CD4-positive, alpha-beta memory T cell (primary cell): ENCODE measurements at regions of chr5 and their contacts with region 1.

Region 1: DNA sequence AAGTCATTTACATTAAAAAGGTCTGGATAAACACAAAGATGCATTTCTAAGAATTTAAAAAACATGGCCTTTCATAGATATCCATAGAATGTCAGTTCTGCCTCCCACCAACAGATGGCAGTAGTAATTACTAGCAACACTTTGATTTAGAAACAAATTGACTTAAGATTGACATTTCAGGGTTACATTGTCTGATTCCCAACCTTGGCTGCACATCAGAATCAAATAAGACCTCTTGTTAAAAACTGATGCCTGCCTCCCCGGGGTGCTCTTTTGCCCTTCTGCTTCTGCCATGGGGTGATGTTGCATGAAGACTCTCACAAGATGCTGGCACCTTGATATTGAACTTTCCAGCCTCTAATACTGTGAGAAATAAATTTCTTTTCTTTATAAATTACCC is 146.2 kb upstream of the GPR151 start:
- DNase-seq: peak in 4 of 5 donors; percentile 28 to 42 (median 40)
- H3K4me3 ChIP-seq: no peak overlapping the region
- H3K4me3 Mint-ChIP-seq: no peak overlapping the region
- H3K27ac ChIP-seq: no peak overlapping the region
- H3K27ac Mint-ChIP-seq: no peak overlapping the region
- H3K4me1 ChIP-seq: no peaks in the 10 kb centered on the region
- H3K4me1 Mint-ChIP-seq: peaks cover 0 to 5% (median 2%) of the 10 kb centered on the region in 4 donors
- H3K27me3 ChIP-seq: no peaks in the 10 kb centered on the region
- H3K27me3 Mint-ChIP-seq: no peaks in the 10 kb centered on the region

Region 2: GRCh38 chr5:146533260-146533857 is 128.9 kb before region 1 on chr5:
- CTCF ChIA-PET with region 1: no interaction called
- POLR2A ChIA-PET with region 1: no interaction called
- intact Hi-C with region 1: loop called (anchors 1 kb)
- DNase-seq: peak; percentile 59 to 66 (median 63)
- H3K4me3 ChIP-seq: no peak overlapping the region
- H3K4me3 Mint-ChIP-seq: no peak overlapping the region
- H3K27ac ChIP-seq: no peak overlapping the region
- H3K27ac Mint-ChIP-seq: peak overlapping the region in 2 of 7 donors; percentile 0 to 30
- H3K4me1 ChIP-seq: no peaks in the 10 kb centered on the region
- H3K4me1 Mint-ChIP-seq: peaks cover 2 to 5% (median 4%) of the 10 kb centered on the region in 4 donors
- H3K27me3 ChIP-seq: no peaks in the 10 kb centered on the region
- H3K27me3 Mint-ChIP-seq: peaks cover 0 to 3% of the 10 kb centered on the region in 2 donors

Region 3: DNA sequence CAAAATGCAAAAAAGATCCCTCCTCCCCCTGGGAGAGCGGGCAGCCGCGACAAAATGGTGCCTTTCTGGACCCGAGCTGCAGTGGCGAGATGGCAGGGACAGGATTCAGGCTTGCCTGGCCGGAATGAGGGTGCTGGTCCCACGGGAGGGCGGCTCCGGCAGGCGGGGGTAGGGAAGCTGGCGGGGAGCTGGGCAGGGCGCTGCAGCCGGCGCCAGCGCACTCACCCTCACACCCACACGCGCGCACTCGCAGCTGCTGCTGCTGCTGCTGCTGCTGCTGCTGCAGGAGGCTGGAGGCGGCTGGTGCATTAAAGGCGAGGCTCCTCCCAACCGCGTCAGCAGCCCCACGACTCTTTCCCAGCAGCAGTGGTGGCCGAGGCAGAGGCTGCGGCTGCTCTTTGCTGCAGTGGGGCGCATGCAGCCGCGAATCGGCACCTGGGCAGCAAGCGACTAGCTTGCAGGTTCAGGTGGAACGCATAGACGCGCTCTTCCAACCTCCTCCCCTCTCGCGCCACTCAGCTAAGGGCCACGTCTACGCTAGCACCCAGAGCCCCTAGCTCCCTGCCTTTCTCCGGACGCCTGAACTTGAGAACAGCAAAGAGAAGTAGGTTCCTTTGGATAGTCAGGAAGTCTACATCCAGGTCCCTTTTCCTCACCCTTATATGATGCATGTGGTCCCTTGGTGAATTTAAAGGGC is 216.4 kb after region 1 on chr5 and contains the start of gene PPP2R2B:
- CTCF ChIA-PET with region 1: interaction called, 5 read pairs
- POLR2A ChIA-PET with region 1: no interaction called
- intact Hi-C with region 1: loop called (anchors 10 kb)
- DNase-seq: peak; percentile 45 to 60 (median 46)
- H3K4me3 ChIP-seq: peak within 1 kb of the TSS; percentile 57 to 70
- H3K4me3 Mint-ChIP-seq: peak within 1 kb of the TSS; percentile 89 to 95 (median 92)
- H3K27ac ChIP-seq: peak within 1 kb of the TSS; percentile 39
- H3K27ac Mint-ChIP-seq: peak within 1 kb of the TSS; percentile 41 to 85 (median 69)
- H3K4me1 ChIP-seq: peaks cover 18% of the 10 kb centered on the region
- H3K4me1 Mint-ChIP-seq: peaks cover 16 to 27% (median 22%) of the 10 kb centered on the region in 4 donors
- H3K27me3 ChIP-seq: no peaks in the 10 kb centered on the region
- H3K27me3 Mint-ChIP-seq: peaks cover 9 to 11% of the 10 kb centered on the region in 2 donors
- total RNA-seq, gene PPP2R2B: 3.1 to 3.9 TPM

Region 4: GRCh38 chr5:146947181-146947941 is 285.1 kb after region 1 on chr5:
- CTCF ChIA-PET with region 1: interaction called, 16 read pairs
- POLR2A ChIA-PET with region 1: no interaction called
- intact Hi-C with region 1: loop called (anchors 5 kb)
- DNase-seq: peak in 2 of 5 donors; percentile 5 to 7
- H3K4me3 ChIP-seq: no peak overlapping the region
- H3K4me3 Mint-ChIP-seq: no peak overlapping the region
- H3K27ac ChIP-seq: no peak overlapping the region
- H3K27ac Mint-ChIP-seq: no peak overlapping the region
- H3K4me1 ChIP-seq: no peaks in the 10 kb centered on the region
- H3K4me1 Mint-ChIP-seq: peaks cover 0 to 6% (median 0%) of the 10 kb centered on the region in 4 donors
- H3K27me3 ChIP-seq: no peaks in the 10 kb centered on the region
- H3K27me3 Mint-ChIP-seq: peaks cover 0 to 4% of the 10 kb centered on the region in 2 donors